ENCODE measurements at regions of chr20 and their contacts with region 1.

Region 1: DNA sequence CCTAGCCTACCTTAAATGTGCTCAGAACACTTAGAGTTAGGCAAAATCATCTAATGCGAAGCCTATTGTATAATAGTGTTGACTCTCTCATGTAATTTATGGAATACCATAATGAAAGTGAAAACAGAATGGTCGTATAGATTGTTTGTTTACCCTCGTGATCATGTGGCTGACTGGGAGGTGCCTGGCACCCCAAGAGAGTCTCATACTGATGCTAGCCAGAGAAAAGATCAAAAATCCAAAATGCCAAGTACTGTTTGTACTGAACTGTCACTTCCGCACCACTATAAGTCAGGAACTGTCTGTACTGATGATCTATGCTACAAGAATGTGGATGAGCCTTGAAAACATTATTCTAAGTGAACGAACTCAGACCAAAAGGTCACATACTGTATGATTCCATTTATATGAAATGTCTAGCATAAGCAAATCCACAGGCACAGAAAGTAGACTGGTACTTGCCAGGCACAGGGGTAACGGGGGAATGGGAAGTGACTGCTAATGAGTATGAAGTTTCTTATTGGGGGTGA is 22.4 kb downstream of the ZMYND8 start:
- DNase-seq: peak; percentile 94
- H3K4me3 ChIP-seq: peak overlapping the region in 1 of 3 experiments; percentile 41
- H3K27ac ChIP-seq: peak overlapping the region; percentile 81
- H3K4me1 ChIP-seq: peaks cover 68% of the 10 kb centered on the region
- H3K27me3 ChIP-seq: no peaks in the 10 kb centered on the region
- CTCF ChIP-seq: no peak

Region 2: GRCh38 chr20:47356526-47357295 is 22.6 kb after region 1 on chr20 and contains the start of gene ZMYND8:
- CTCF ChIA-PET with region 1: no interaction called
- dilution Hi-C with region 1: no loop called
- in situ Hi-C with region 1: no loop called
- intact Hi-C with region 1: loop called (anchors 1 kb)
- DNase-seq: peak; percentile 95
- H3K4me3 ChIP-seq: peak within 1 kb of the TSS; percentile 36 to 46 (median 45)
- H3K27ac ChIP-seq: peak within 1 kb of the TSS; percentile 94
- H3K4me1 ChIP-seq: peaks cover 98% of the 10 kb centered on the region
- H3K27me3 ChIP-seq: no peaks in the 10 kb centered on the region
- CTCF ChIP-seq: no peak
- total RNA-seq, gene ZMYND8: 18.7 to 59.6 TPM